ENCODE measurements at regions of chr3 and their contacts with region 1.

Region 1: GRCh38 chr3:39499651-39500240 is 32.3 kb downstream of the MOBP start:
- DNase-seq: no peak
- ATAC-seq: no peak
- H3K4me3 Mint-ChIP-seq: no peak overlapping the region
- H3K27ac Mint-ChIP-seq: no peak overlapping the region
- H3K4me1 Mint-ChIP-seq: peaks cover 23% of the 10 kb centered on the region
- H3K27me3 Mint-ChIP-seq: peaks cover 51% of the 10 kb centered on the region

Region 2: DNA sequence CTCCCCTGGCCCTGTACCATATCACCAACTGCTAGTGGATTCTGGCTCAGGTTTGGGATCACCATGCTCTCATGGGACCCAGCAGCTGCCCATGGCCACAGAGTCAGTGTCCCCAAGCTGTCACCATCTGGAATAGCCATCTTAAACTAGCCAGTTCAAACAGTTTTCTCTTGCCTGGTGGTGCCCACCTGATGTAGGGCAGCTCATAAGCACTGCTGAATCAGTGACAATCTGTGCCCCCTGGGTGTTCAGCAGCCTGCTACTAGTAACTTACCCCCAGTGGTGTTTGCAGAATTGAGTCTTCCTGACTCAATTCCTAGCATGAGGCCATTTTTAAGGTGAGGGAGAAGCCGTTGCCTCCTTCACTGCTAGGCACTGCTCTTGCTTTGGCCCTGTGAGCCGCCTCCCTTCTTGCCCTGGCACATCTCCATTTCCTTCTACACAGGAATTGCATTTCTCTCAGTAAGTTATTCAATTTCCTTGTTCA is 85.3 kb before region 1 on chr3:
- CTCF ChIA-PET with region 1: interaction called, 18 read pairs
- POLR2A ChIA-PET with region 1: no interaction called
- DNase-seq: no peak
- ATAC-seq: no peak
- H3K4me3 Mint-ChIP-seq: no peak overlapping the region
- H3K27ac Mint-ChIP-seq: peak overlapping the region; percentile 4
- H3K4me1 Mint-ChIP-seq: peaks cover 28% of the 10 kb centered on the region
- H3K27me3 Mint-ChIP-seq: no peaks in the 10 kb centered on the region

Measured in activated CD8-positive, alpha-beta T cell treated with anti-CD3 and anti-CD28 coated beads, Interleukin-2, amount 10 ng/mL, durations not matched to agents 7 days and 5 days (primary cell).